Mammary epithelial cell (primary cell): ENCODE measurements at regions of chr4 and their contacts with region 1.

Region 1: DNA sequence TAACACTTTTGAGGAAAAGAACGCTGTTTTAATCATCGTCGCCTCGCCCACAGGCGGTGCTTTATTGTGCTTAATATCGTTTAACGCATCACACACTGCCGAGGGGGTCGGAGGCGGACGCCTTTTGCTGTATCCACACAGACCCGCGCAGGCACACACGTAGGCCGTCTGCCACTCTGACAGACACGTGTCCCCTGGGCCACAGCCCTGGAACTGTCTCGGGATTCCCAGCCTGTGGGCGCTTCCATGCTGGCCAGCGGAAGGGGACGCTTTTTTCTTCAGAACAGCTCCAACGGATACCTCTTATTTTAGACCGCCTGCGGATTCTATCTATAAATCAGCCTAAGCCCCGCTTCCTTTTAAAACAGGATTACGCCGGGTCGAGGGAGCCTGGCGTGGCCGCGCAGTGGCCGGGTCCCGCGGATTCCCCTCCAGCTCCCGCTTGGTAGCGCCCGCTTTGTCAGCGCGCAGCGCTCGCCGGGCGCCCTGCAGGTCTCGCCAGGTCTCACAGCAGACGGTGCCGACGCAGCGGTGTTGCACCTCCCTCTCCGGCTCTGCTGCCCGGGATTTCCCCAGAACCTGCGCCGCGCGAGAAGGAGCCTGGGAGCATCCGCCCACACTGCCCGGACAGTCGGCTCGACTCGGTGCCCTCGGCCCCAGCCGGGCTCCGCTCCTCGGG is at the start of gene NOCT:
- DNase-seq: peak; percentile 93
- H3K4me3 ChIP-seq: peak within 1 kb of the TSS; percentile 53 to 100 (median 91)
- H3K27ac ChIP-seq: peak within 1 kb of the TSS; percentile 97
- H3K4me1 ChIP-seq: peaks cover 39% of the 10 kb centered on the region
- H3K27me3 ChIP-seq: no peaks in the 10 kb centered on the region
- CTCF ChIP-seq: no peak
- total RNA-seq, gene NOCT: 20.6 to 34.8 TPM

Region 2: GRCh38 chr4:138938366-138938690 is 77.1 kb before region 1 on chr4:
- CTCF ChIA-PET with region 1: no interaction called
- dilution Hi-C with region 1: loop called (anchors 5 kb)
- in situ Hi-C with region 1: no loop called
- intact Hi-C with region 1: no loop called
- DNase-seq: peak; percentile 48
- H3K4me3 ChIP-seq: no peak overlapping the region
- H3K27ac ChIP-seq: no peak overlapping the region
- H3K4me1 ChIP-seq: peaks cover 8% of the 10 kb centered on the region
- H3K27me3 ChIP-seq: no peaks in the 10 kb centered on the region
- CTCF ChIP-seq: peak; percentile 35 to 60

Region 3: DNA sequence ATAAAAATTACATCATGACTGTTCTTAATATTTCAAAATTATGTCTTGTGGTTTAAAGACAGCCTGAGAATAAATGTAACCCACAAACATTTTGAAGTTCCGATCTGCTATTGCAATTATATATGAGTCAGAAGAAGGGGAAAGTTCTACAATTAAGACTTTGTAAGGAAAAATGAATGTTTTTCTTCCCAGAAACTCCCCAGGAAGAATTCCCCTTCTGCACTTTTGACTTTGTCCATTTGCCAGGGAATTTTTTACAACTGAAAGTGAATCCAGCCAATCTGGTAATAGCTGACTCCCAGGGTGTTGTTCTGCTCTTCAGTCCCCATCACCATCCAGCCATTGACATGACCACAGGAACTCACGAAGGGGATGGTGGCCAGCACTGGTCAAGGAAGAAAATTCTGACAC is 61.4 kb before region 1 on chr4:
- CTCF ChIA-PET with region 1: no interaction called
- dilution Hi-C with region 1: no loop called
- in situ Hi-C with region 1: no loop called
- intact Hi-C with region 1: loop called (anchors 2 kb)
- DNase-seq: peak; percentile 95
- H3K4me3 ChIP-seq: no peak overlapping the region
- H3K27ac ChIP-seq: peak overlapping the region; percentile 26
- H3K4me1 ChIP-seq: peaks cover 32% of the 10 kb centered on the region
- H3K27me3 ChIP-seq: no peaks in the 10 kb centered on the region
- CTCF ChIP-seq: no peak

Region 4: DNA sequence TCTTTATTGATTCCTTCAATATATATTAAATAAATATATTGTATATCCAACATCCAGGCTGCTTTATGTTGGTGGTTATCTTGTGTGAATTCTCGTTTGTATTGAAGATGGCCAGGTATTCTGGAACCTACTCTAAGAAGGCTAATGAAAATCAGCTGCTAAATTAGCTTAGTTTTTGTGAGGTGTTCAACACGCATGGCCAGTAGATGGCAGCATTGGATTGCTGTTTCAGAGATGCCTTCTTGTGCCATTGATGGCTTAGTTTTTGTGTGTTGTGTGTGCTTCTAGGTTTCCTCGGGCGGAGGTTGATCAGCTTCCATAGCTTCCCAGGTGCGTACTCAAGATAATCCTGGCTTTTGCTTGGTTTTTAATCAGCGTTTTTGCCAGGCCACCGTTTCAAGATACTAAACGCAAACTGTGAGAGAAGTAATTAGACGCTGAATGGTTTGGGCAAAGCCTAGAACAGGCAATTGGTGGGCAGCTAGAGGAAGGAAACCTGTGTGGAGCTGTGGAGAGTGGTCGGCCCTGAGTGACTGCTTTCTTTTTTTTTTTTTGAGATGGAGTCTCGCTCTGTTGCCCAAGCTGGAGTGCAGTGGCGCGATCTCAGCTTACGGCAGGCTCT is 15.3 kb after region 1 on chr4:
- CTCF ChIA-PET with region 1: interaction called, 7 read pairs
- dilution Hi-C with region 1: no loop called
- in situ Hi-C with region 1: no loop called
- intact Hi-C with region 1: loop called (anchors 1 kb)
- DNase-seq: peak; percentile 66
- H3K4me3 ChIP-seq: no peak overlapping the region
- H3K27ac ChIP-seq: no peak overlapping the region
- H3K4me1 ChIP-seq: no peaks in the 10 kb centered on the region
- H3K27me3 ChIP-seq: no peaks in the 10 kb centered on the region
- CTCF ChIP-seq: peak; percentile 82 to 93

Region 5: DNA sequence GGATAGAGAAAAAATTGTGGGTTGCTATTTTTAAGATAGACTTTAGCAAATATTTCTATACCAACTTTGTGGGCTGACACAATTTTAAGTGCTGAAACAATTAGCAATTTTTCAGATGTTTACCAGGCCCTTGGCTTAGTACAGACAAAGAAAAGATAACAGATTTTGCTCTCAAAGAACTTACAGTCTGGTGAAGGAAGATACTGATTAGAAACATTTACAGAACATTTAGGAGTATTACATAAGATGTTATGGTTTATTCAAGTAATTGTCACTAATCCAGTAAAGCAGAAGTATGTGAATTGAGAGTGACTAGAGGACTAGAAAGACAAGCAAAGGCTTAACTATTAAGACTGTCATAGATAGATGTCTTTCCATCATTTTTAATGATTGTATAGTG is 322.2 kb after region 1 on chr4:
- CTCF ChIA-PET with region 1: no interaction called
- dilution Hi-C with region 1: no loop called
- in situ Hi-C with region 1: no loop called
- intact Hi-C with region 1: no loop called
- DNase-seq: no peak
- H3K4me3 ChIP-seq: no peak overlapping the region
- H3K27ac ChIP-seq: no peak overlapping the region
- H3K4me1 ChIP-seq: peaks cover 2% of the 10 kb centered on the region
- H3K27me3 ChIP-seq: no peaks in the 10 kb centered on the region
- CTCF ChIP-seq: no peak